Activated T-helper 1 cell treated with anti-CD3 and anti-CD28 coated beads, Interleukin-12 subunit alpha, Interleukin-12 subunit beta, Interleukin-2, Interleukin-4 antibody, amounts not matched to agents 30 ng/mL and 10 ng/mL and 1 ng/mL, durations not matched to agents 14 hours and 24 hours and 36 hours (primary cell): ENCODE measurements at regions of chr1 and their contacts with region 1.

Region 1: GRCh38 chr1:61077676-61078541 is 4.5 kb upstream of the NFIA start:
- DNase-seq: peak; percentile 80
- H3K4me3 Mint-ChIP-seq: peak overlapping the region; percentile 92
- H3K27ac Mint-ChIP-seq: peak overlapping the region; percentile 16
- H3K4me1 Mint-ChIP-seq: peaks cover 43% of the 10 kb centered on the region
- H3K27me3 Mint-ChIP-seq: peaks cover 50% of the 10 kb centered on the region

Region 2: GRCh38 chr1:61056573-61057439 is 21.1 kb before region 1 on chr1:
- intact Hi-C with region 1: loop called (anchors 1 kb)
- DNase-seq: no peak
- H3K4me3 Mint-ChIP-seq: peak overlapping the region; percentile 74
- H3K27ac Mint-ChIP-seq: no peak overlapping the region
- H3K4me1 Mint-ChIP-seq: peaks cover 29% of the 10 kb centered on the region
- H3K27me3 Mint-ChIP-seq: peaks cover 80% of the 10 kb centered on the region

Region 3: GRCh38 chr1:61132176-61133001 is 54.5 kb after region 1 on chr1:
- intact Hi-C with region 1: no loop called
- DNase-seq: no peak
- H3K4me3 Mint-ChIP-seq: no peak overlapping the region
- H3K27ac Mint-ChIP-seq: no peak overlapping the region
- H3K4me1 Mint-ChIP-seq: peaks cover 5% of the 10 kb centered on the region
- H3K27me3 Mint-ChIP-seq: peaks cover 18% of the 10 kb centered on the region

Region 4: GRCh38 chr1:61741711-61742619 is 664.1 kb after region 1 on chr1 and contains the start of gene PATJ:
- intact Hi-C with region 1: loop called (anchors 2 kb)
- DNase-seq: peak; percentile 59
- H3K4me3 Mint-ChIP-seq: peak within 1 kb of the TSS; percentile 92
- H3K27ac Mint-ChIP-seq: peak within 1 kb of the TSS; percentile 88
- H3K4me1 Mint-ChIP-seq: peaks cover 22% of the 10 kb centered on the region
- H3K27me3 Mint-ChIP-seq: no peaks in the 10 kb centered on the region
- total RNA-seq, gene PATJ: 5.1 and 7.3 TPM in 2 replicates